Pancreas (tissue), 10 donors: ENCODE measurements at regions of chr2 and their contacts with region 1.

Region 1: DNA sequence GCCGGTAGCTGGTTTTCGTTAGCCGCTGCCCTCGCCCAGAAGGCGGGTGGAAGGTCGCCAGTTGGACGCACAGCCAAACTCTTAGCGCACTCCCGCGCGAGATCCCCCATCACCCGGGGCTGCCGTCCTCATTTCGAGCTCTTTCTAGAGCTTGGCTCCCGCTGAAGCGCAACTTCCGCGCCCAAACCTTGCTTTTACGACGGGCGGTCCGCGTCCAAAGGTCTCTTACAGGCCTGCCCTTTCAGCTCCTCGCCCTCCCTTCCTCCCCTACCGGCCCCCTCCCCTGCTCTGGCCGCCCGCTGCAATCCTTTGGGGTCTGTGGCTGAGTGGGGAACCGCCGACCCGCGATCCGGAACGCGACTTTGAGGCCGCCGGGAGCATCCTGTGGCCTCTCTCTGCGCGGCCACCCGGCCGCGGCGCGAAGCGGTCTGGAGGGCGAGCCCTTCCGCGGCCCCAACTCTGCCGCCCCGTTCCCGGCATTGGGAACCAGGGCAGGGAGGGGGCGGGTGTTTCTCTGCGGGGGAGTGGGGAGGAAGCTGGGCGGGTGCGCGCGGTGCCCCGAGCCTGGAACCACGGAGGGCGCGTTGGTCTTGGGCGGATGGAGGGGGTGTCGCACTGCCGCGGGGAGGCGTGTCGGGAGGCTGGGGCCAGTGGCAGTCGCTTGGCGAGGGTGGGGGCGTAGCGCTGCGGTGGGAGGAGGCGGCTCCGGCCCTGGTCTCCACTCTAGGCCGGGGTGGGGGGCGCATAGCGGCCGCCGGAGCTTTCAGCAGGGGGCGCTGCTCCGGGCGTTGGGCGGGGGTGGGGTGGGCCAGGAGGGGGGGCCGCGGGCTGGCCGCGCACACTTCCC is at the start of gene GDF7:
- DNase-seq: peak in 2 of 6 donors; percentile 64 to 82
- ATAC-seq: peak; percentile 20 to 61 (median 46)
- H3K4me3 ChIP-seq: peak within 1 kb of the TSS; percentile 7 to 46 (median 22)
- H3K27ac ChIP-seq: peak within 1 kb of the TSS in 1 of 4 donors; percentile 5
- H3K4me1 ChIP-seq: no peaks in the 10 kb centered on the region
- H3K27me3 ChIP-seq: peaks cover 0 to 21% (median 8%) of the 10 kb centered on the region in 4 donors
- CTCF ChIP-seq: peak in 1 of 4 donors; percentile 7
- total RNA-seq, gene GDF7: 0.16 to 0.98 (median 0.73) TPM

Region 2: GRCh38 chr2:20962939-20963557 is 296.5 kb after region 1 on chr2:
- intact Hi-C with region 1: loop called (anchors 5 to 10 kb)
- DNase-seq: peak in 5 of 6 donors; percentile 47 to 87 (median 68)
- ATAC-seq: peak; percentile 64 to 98 (median 92)
- H3K4me3 ChIP-seq: no peak overlapping the region
- H3K27ac ChIP-seq: no peak overlapping the region
- H3K4me1 ChIP-seq: no peaks in the 10 kb centered on the region
- H3K27me3 ChIP-seq: no peaks in the 10 kb centered on the region
- CTCF ChIP-seq: peak; percentile 80 to 90 (median 82)

Region 3: GRCh38 chr2:22253171-22253570 is 1586.6 kb after region 1 on chr2:
- intact Hi-C with region 1: no loop called
- DNase-seq: no peak
- ATAC-seq: no peak
- H3K4me3 ChIP-seq: no peak overlapping the region
- H3K27ac ChIP-seq: no peak overlapping the region
- H3K4me1 ChIP-seq: no peaks in the 10 kb centered on the region
- H3K27me3 ChIP-seq: no peaks in the 10 kb centered on the region
- CTCF ChIP-seq: no peak